Mammary epithelial cell (primary cell): ENCODE measurements at regions of chr14 and their contacts with region 1.

Region 1: GRCh38 chr14:67729072-67729885 is 27.6 kb downstream of the RDH12 start:
- DNase-seq: no peak
- H3K4me3 ChIP-seq: no peak overlapping the region
- H3K27ac ChIP-seq: no peak overlapping the region
- H3K4me1 ChIP-seq: peaks cover 8% of the 10 kb centered on the region
- H3K27me3 ChIP-seq: no peaks in the 10 kb centered on the region
- CTCF ChIP-seq: no peak

Region 2: DNA sequence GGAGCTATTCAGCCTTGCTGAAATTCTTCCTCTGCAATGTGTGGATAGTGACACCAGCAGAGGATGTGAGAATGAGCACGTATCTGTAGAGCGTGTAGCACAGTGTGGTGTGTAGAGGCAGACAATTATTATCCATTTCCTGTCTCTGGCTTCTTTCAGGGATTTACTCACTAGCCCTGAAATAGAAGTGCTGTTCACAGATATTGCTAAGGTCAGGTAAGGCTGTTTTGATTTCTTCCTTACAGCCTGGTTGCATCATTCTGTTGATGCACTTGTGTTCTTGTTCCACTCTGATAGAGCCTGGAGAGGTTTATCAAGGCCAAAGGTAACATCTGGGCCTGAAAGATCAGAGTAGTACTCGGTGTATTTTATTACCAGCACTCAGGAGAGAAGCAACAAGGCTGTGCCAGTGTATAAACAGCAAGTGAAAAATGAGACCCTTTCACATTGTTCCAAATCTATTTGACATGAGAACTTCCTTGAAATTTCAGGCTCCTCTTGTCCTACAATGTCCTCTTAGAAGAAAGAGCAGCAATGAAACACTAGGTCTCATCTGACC is 92.8 kb before region 1 on chr14:
- CTCF ChIA-PET with region 1: no interaction called
- dilution Hi-C with region 1: no loop called
- in situ Hi-C with region 1: no loop called
- intact Hi-C with region 1: no loop called
- DNase-seq: peak; percentile 3
- H3K4me3 ChIP-seq: no peak overlapping the region
- H3K27ac ChIP-seq: no peak overlapping the region
- H3K4me1 ChIP-seq: no peaks in the 10 kb centered on the region
- H3K27me3 ChIP-seq: no peaks in the 10 kb centered on the region
- CTCF ChIP-seq: no peak

Region 3: GRCh38 chr14:67695394-67695949 is 33.8 kb before region 1 on chr14 and contains the start of gene RDH11:
- CTCF ChIA-PET with region 1: no interaction called
- dilution Hi-C with region 1: no loop called
- in situ Hi-C with region 1: no loop called
- intact Hi-C with region 1: no loop called
- DNase-seq: peak; percentile 88
- H3K4me3 ChIP-seq: peak within 1 kb of the TSS; percentile 69 to 93 (median 77)
- H3K27ac ChIP-seq: peak within 1 kb of the TSS; percentile 97
- H3K4me1 ChIP-seq: peaks cover 22% of the 10 kb centered on the region
- H3K27me3 ChIP-seq: no peaks in the 10 kb centered on the region
- CTCF ChIP-seq: no peak
- total RNA-seq, gene RDH11: 99.1 to 145 TPM

Region 4: GRCh38 chr14:67763158-67763788 is 34.0 kb after region 1 on chr14:
- CTCF ChIA-PET with region 1: no interaction called
- dilution Hi-C with region 1: loop called (anchors 5 kb)
- in situ Hi-C with region 1: no loop called
- intact Hi-C with region 1: no loop called
- DNase-seq: no peak
- H3K4me3 ChIP-seq: no peak overlapping the region
- H3K27ac ChIP-seq: no peak overlapping the region
- H3K4me1 ChIP-seq: no peaks in the 10 kb centered on the region
- H3K27me3 ChIP-seq: no peaks in the 10 kb centered on the region
- CTCF ChIP-seq: no peak